ENCODE measurements at regions of chr9 and their contacts with region 1.

Region 1: GRCh38 chr9:71806901-71807307 is 38.6 kb upstream of the CEMIP2 start:
- DNase-seq: peak; percentile 65
- H3K4me3 ChIP-seq: no peak overlapping the region
- H3K27ac ChIP-seq: no peak overlapping the region
- H3K4me1 ChIP-seq: peaks cover 6% of the 10 kb centered on the region
- H3K27me3 ChIP-seq: no peaks in the 10 kb centered on the region
- CTCF ChIP-seq: peak; percentile 85

Region 2: DNA sequence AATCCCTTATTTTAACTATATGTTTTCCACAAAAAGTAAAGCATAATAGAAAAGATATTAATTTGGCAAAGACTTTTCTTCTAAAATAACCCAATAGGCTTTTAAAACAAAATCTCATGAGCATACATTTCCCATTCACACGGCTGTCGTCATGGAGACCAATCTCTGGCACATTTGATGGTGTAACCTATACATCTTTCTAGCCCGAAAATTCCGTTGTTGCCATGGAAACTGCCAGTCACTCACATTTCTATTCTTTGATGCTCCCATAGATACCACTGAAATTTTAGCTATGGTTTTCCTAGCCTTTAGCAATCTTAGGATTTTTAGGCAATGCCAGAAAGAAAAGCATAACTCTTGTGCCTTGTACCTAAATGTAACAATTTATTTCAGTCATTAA is 422.6 kb before region 1 on chr9:
- intact Hi-C with region 1: no loop called
- DNase-seq: no peak
- H3K4me3 ChIP-seq: no peak overlapping the region
- H3K27ac ChIP-seq: no peak overlapping the region
- H3K4me1 ChIP-seq: no peaks in the 10 kb centered on the region
- H3K27me3 ChIP-seq: no peaks in the 10 kb centered on the region
- CTCF ChIP-seq: no peak

Region 3: DNA sequence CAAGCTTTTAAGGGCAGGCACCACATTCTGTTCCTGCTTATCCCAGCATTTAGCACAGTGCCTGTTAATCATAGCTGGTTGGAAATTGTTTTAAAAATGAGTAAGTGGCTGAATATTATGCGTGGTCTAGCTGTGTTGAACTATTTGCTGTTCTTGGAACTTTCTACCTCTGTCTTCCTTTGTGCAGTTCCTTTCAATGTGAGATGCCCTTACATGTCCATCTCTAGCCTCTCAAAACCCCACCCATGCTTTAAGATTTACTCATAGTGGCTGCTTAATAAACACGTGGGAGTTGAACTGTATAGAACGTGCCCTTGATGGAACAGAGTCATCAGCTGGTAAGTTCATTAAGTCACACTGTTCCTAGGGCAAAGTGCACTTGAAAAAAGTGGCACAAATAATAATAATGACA is 219.0 kb after region 1 on chr9:
- intact Hi-C with region 1: loop called (anchors 5 kb)
- DNase-seq: no peak
- H3K4me3 ChIP-seq: no peak overlapping the region
- H3K27ac ChIP-seq: peak overlapping the region; percentile 65
- H3K4me1 ChIP-seq: no peaks in the 10 kb centered on the region
- H3K27me3 ChIP-seq: no peaks in the 10 kb centered on the region
- CTCF ChIP-seq: no peak